Activated naive CD8-positive, alpha-beta T cell treated with anti-CD3 and anti-CD28 coated beads, Interleukin-2, amount 10 ng/mL, durations not matched to agents 7 days and 5 days (primary cell): ENCODE measurements at regions of chr9 and their contacts with region 1.

Region 1: DNA sequence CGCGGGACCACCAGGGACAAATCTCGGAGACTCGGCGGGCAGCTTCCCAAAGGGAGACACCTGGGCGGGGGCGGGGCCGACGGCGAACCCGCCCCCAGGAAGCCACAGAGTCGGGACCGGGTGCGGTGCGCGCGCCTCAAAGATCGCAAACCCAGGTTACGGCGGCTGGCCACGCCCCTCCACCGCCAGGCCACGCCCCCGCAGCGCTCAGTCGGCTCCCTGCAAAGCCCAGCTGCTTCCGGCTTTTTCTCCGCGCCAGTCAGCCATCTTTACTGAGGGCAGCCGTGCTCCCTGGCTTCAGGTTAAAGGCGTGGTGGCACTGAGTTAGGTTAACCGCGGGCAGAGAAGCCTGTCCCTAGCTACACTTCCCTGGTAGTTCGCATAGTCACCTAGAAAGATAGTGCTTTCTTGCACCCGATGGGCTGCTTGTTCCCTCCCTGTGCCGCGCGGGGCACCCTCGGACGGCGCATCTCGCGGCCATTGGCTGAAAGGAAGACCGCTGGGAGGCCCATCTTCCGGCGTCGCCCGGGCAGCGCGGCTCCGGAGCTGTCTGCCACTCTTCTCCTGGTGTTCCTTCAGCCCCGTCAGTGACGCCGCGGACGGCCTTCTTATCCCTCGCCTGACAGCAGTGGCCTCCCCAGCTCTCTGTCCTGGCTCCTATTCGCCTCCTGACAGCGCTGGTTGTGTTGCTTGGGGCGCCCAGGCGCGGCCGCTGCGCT is at the start of gene TBC1D2:
- DNase-seq: peak; percentile 99
- ATAC-seq: peak; percentile 82
- H3K4me3 Mint-ChIP-seq: peak within 1 kb of the TSS; percentile 98
- H3K27ac Mint-ChIP-seq: peak within 1 kb of the TSS; percentile 97
- H3K4me1 Mint-ChIP-seq: peaks cover 16% of the 10 kb centered on the region
- H3K27me3 Mint-ChIP-seq: peaks cover 6% of the 10 kb centered on the region
- total RNA-seq, gene TBC1D2: 6.4 to 6.8 TPM

Region 2: GRCh38 chr9:98045234-98046179 is 210.2 kb before region 1 on chr9:
- POLR2A ChIA-PET with region 1: interaction called, 17 read pairs
- DNase-seq: no peak
- ATAC-seq: peak; percentile 94
- H3K4me3 Mint-ChIP-seq: peak overlapping the region; percentile 88
- H3K27ac Mint-ChIP-seq: peak overlapping the region; percentile 98
- H3K4me1 Mint-ChIP-seq: peaks cover 27% of the 10 kb centered on the region
- H3K27me3 Mint-ChIP-seq: peaks cover 7% of the 10 kb centered on the region

Region 3: GRCh38 chr9:98101868-98102273 is 153.9 kb before region 1 on chr9:
- POLR2A ChIA-PET with region 1: interaction called, 26 read pairs
- DNase-seq: peak; percentile 68
- ATAC-seq: peak; percentile 99
- H3K4me3 Mint-ChIP-seq: peak overlapping the region; percentile 89
- H3K27ac Mint-ChIP-seq: peak overlapping the region; percentile 98
- H3K4me1 Mint-ChIP-seq: peaks cover 62% of the 10 kb centered on the region
- H3K27me3 Mint-ChIP-seq: no peaks in the 10 kb centered on the region

Region 4: DNA sequence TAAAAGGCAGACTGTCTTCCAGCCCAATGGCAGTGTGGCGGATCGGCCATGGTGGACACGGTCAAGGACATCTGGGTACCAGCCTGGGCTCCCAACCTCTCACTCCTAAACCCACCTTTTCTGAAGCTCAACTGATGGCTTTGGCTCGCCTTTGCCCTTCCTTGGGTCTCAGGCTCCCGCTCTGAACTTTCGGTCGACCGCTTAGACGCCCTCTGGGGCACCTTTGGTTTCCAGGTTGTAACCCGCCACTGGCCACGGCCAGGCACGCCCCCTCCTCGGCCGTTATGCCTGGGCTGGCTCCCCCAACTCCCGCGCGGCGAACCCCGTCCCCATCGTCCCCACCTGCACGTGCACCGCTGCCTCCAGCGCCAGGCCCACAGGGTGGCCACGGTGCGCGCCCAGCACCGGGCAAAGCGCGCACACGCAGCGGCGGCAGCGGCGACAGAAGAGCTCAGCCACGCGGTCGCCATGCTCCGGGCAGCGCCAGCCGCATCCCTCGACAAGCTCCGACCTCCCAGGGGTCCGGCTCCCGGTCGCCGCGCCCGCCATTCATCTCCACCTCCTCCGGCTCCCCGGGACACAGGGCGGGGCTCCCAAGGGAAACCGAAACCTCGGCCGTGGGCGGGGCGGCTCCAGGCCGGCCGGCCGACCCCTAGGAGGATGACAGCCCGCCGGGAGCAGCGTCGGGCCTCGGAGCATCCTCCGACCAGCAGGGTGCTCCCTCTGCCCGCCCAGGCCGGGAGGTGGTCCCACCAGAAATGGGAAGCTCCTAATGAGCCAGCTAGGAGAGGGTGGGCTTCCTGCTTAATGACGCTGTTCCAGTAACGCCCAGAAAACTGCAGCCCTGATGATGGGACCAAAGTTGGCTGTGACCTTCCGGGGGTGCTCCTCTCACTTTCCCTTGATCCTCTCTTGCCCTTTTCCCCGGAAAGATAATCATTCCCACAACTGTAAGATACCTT is 136.8 kb before region 1 on chr9 and contains the start of gene TRIM14:
- POLR2A ChIA-PET with region 1: interaction called, 35 read pairs
- DNase-seq: peak; percentile 81
- ATAC-seq: peak; percentile 72
- H3K4me3 Mint-ChIP-seq: peak within 1 kb of the TSS; percentile 91
- H3K27ac Mint-ChIP-seq: peak within 1 kb of the TSS; percentile 94
- H3K4me1 Mint-ChIP-seq: peaks cover 41% of the 10 kb centered on the region
- H3K27me3 Mint-ChIP-seq: no peaks in the 10 kb centered on the region
- total RNA-seq, gene TRIM14: 99.0 to 108 TPM